Sciatic nerve (tissue), 2 donors: ENCODE measurements at regions of chr10 and their contacts with region 1.

Region 1: GRCh38 chr10:70461215-70461986 is 17.2 kb upstream of the PALD1 start:
- DNase-seq: peak; percentile 72
- ATAC-seq: peak; percentile 76

Region 2: DNA sequence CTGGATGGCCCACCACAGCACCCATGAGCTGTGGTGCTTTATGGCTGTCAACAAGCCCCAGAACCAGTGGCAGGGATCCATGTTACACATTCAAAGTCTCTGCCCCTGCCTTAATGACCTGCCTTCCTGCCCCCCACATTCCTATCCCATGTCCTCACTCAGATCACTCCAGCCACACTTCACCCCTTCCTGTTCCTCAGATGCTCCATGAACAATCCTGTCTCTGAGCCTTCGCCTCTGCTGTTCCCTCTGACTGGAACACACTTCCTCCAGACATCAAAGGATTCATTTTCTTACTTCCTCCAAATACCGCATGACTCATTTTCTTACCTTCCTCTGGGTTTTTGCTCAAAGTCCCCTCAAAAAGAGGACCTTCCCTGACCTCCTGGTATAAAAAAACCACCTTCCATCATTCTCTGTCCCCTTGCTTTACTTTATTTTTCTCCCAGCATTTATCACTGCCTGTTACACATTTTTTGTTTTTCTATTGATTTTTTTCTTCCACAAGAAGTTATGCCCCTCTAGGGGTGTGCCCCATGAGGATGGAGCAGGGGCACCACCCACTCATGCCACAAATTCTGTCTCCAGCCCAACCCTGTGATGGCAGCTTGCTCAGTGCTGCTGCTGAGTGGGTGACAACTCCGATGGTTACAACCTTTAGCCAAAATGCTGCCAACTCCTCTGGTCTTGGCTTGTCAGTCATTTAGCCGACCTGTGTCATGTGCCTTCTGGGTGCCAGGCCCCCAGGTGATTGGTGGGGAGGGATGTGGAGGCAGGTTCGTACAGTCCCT is 641.5 kb before region 1 on chr10:
- intact Hi-C with region 1: no loop called
- DNase-seq: no peak
- ATAC-seq: no peak

Region 3: DNA sequence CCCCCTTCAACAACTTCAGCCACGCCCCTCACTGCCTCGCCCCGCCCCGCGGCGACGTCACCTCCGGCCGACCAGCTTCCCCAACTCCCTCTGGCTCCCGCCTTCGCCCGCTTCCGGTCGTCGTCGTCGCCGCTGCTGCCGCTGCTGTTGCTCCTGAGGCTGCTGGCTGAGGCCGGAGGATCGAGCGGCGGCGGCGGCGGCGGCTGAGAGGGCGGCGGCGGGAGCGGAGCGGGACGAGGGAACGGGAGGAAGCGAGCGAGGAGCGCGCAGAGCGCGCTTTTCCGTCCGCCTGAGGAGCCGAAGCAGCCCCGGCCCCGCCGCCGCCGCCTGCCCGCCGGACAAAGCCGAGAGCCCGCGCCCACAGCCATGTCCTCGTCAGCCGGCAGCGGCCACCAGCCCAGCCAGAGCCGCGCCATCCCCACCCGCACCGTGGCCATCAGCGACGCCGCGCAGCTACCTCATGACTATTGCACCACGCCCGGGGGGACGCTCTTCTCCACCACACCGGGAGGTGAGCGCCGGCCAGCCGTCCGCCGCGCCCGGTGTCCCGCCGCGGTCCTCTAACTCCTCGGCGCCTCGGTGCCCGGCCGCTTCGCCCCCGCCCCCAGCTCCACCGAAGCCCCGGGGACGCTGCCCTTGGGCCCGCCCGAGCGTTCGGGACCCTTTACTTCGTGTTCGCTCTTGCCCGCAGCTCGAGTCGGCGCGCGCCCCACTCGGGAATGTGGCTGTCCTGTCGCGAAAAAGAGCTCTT is 57.2 kb before region 1 on chr10 and contains the start of gene EIF4EBP2:
- intact Hi-C with region 1: no loop called
- DNase-seq: peak; percentile 100
- ATAC-seq: peak; percentile 95
- total RNA-seq, gene EIF4EBP2: 57.8 TPM

Region 4: DNA sequence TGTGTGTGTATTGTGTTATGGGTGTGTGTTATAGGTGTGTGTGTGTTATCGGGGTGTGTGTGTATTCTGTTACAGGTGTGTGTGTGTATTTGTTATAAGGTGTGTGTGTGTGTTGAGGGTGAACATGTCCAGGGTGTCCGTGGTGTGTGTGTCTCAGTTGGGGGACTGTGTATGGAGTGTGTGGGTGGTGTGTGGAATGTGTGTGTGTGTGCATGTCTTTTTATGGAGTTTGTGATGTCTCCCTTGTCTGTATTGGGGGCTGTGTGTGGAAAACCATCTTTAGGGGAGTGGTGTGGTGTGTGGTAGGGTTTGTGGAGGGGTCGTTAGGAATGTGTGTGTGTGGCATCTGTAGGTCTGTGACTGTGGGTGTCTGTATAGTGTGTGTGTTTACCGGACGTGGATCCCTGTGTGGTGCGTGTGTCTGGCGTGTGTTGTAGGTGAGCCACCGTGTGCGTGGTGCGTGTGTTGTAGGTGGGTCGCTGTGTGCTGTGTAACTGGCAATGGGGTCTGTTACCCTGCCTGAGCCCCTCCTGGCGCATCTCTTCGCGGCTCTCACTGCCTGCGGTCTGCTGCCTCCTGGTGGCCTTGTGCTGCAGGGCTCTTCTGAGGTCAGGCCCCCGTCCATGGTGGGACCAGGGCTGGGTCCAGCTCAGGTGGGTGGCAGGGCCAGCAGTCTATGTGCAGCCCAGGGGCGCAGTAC is 78.8 kb after region 1 on chr10:
- intact Hi-C with region 1: loop called (anchors 5 kb)
- DNase-seq: no peak
- ATAC-seq: peak; percentile 26

Region 5: DNA sequence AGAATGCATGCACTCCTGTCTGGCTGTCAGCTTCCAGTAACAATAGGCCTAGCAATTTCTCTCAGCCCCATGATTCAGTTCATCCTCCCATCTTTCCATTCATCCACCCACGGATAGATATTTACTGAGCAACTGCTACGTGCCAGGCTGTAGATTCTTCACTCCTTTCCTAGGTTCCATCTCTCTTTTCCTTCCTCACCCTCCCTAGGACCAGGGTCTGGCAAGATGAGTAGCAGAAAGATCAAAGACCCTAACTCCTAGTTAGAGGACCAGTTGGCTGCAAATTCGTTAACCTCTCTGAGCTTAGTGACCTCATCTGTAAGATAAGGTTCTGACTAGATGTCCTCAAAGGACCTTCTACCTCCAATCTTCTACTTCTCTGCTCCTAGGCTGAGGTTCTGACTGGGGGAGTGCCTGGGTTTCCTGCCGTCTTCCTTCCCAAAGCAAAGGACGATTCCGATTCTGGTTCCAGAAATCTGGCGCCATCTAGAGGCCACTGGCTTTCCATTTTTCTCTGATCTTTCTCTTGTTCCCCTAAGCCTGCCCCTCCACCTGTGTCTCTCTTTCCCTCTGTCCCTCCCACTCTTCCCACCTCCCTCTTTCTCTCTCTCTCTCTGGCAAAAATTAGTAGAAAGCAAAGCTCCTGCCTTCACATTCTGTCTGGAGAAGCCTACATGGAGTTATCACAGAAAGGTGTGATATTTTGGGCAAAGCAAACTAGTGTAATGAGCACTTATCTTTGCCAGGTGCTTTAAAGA is 297.5 kb after region 1 on chr10:
- intact Hi-C with region 1: loop called (anchors 10 kb)
- DNase-seq: peak; percentile 86
- ATAC-seq: peak; percentile 51